ENCODE measurements at regions of chr17 and their contacts with region 1.

Region 1: GRCh38 chr17:44044067-44044466 is 22.4 kb downstream of the LSM12 start:
- DNase-seq: no peak
- H3K4me3 ChIP-seq: no peak overlapping the region
- H3K27ac ChIP-seq: no peak overlapping the region
- H3K4me1 ChIP-seq: no peaks in the 10 kb centered on the region
- H3K27me3 ChIP-seq: no peaks in the 10 kb centered on the region
- CTCF ChIP-seq: no peak
- EP300 ChIP-seq: no peak
- POLR2A ChIP-seq: no peak

Region 2: DNA sequence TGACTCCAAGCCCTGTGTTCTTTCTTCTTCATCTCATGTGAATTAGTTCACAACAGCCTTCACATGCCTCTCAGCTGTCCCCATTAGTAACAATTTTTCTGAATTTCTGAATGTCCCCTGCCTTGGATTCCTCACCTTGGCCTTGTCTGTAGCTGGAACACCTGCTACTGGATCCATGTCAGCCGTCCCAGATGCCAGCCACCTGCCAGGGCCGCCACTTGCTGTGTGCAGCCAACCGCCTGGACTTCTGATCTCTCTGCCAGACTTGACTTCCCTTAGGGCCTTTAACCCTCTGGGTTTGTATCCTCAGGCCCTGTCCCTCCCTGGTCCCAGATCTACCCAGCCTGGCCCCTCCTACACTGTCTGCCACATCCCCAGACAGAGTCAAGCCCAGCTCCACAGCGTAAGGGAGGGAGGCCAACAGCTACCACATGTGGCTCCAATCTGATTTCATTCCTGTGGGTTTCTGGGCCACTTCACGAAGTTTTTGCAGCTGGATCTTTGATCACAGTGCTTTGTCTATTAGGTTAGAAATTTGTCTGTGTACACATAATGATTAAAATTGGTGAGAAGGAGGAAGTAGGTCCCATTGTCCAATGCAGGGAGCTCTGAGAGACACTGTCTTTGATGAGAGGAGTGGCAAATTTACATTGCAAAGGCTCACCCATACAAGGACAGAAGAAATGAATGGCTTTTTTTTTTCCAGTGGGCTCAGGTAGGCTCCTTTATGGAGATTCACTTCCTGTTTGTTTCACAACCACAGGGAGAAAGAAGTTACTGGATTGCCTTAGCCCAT is 152.0 kb before region 1 on chr17:
- intact Hi-C with region 1: no loop called
- DNase-seq: no peak
- H3K4me3 ChIP-seq: no peak overlapping the region
- H3K27ac ChIP-seq: no peak overlapping the region
- H3K4me1 ChIP-seq: no peaks in the 10 kb centered on the region
- H3K27me3 ChIP-seq: no peaks in the 10 kb centered on the region
- CTCF ChIP-seq: no peak
- EP300 ChIP-seq: no peak
- POLR2A ChIP-seq: no peak

Region 3: DNA sequence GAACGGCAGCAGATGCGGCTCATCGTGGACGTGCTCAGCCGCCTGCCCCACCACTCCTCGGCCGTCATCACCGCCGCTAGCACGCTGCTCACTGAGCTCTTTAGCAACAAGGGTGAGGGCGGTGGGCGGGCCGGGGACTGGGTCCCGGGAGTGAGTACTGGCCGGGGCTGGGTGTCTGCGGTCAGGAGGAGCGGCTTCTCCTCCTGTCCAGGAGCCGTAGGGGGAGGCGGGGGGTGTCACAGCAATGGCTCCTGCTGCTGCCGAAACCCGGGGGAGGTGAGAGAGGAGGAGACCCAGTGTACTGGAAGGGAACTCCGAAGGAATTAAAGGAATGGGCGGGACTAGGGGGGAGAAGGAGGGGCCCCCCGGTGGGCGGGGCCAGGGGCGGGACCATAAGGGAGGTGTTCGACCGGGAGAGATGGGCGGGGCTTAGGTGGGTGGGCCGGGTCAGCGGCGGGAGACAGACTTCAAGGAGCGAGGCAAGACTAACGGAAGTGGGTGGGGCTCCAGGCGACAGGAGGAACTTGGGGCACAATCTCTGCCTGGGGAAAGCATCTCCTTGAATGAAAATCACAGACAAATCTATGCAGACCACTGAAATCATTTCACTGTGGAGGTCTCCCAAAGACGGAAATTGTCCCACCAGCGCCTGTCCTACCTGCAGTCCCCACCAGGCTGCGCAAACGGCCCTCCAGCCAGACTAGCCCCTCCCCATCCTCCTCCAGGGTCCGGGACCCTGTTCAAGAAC is 37.3 kb before region 1 on chr17:
- intact Hi-C with region 1: loop called in 1 of 4 experiments (anchors 5 kb)
- DNase-seq: peak; percentile 95 to 97 (median 96)
- H3K4me3 ChIP-seq: peak overlapping the region; percentile 50
- H3K27ac ChIP-seq: no peak overlapping the region
- H3K4me1 ChIP-seq: peaks cover 10% of the 10 kb centered on the region
- H3K27me3 ChIP-seq: peaks cover 2% of the 10 kb centered on the region
- CTCF ChIP-seq: peak in 2 of 3 donors; percentile 51 to 59
- EP300 ChIP-seq: no peak
- POLR2A ChIP-seq: no peak